GM13976 (cell line): ENCODE measurements at regions of chr11 and their contacts with region 1.

Region 1: GRCh38 chr11:96424693-96425092 is 34.9 kb downstream of the JRKL start:
- DNase-seq: no peak
- CTCF ChIP-seq: no peak

Region 2: DNA sequence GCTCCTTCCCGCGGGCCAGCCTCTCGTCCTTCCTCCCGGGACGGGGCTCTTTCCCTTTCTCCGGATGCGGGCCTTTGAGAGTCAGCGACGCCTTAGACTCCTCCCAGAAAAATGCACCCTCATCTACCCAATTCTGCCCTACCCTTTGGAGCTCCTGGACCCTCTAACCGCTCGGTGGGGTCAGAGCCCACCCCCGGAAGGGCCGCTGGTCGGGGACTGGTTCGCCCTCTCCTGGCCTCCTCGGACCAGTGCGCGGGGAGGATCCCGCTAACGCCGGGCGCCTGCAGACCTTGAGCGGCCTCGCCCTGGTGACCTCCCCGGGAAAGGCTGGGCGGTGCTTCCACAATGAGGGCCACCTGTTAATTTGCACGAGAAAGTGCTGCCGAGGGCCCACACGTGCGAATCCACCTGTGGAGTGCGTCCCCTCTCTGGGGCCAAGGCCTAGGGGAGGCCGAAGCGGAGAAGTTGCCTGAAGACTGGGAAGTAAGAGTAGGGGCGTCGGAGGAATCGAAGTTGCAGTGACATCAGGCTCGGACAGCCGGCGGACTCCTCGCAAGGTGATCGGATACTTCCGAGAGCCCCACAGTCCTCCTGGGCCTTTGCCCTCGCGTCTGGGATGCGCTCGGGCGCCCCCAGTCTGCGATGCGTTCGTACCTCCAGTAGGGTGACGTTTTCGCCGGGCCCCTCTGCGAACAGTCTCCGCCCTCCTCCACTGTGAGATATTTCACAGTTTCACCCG is 1273.6 kb before region 1 on chr11:
- in situ Hi-C with region 1: loop called (anchors 25 kb)
- DNase-seq: peak; percentile 93
- CTCF ChIP-seq: peak; percentile 61

Region 3: GRCh38 chr11:95835768-95836488 is 588.8 kb before region 1 on chr11:
- in situ Hi-C with region 1: loop called (anchors 10 kb)
- DNase-seq: peak; percentile 24
- CTCF ChIP-seq: peak; percentile 85